ENCODE measurements at regions of chr6 and their contacts with region 1.

Region 1: DNA sequence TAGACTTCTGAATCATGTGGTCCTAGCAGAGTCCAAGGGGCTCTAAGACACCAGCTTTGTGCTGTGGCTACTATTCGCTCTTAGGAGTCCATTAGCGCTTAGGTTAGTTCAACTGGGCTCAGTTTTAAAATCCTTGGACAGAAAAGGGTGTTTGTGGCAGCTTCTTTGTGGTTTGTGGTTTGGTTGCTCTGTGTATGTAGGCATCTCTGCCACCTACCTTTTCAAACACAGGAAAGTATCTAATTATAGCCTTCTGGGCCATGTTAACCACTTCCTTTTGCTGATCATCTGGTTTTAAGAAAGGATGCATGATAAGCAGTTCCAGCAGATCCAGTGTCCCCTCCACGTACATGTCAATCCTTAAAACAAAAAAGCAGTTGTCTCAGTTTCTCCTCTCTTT is 10.8 kb downstream of the GSTA4 start:
- DNase-seq: peak in 27 of 35 experiments; percentile 3 to 77 (median 22)
- ATAC-seq: peak; percentile 64 to 98 (median 94)
- H3K4me3 ChIP-seq: peak overlapping the region in 1 of 2 donors; percentile 0
- H3K4me3 Mint-ChIP-seq: peak overlapping the region; percentile 46 to 66 (median 53)
- H3K27ac ChIP-seq: no peak overlapping the region
- H3K27ac Mint-ChIP-seq: peak overlapping the region in 1 of 2 donors; percentile 15
- H3K4me1 ChIP-seq: peaks cover 30 to 32% of the 10 kb centered on the region in 2 experiments
- H3K4me1 Mint-ChIP-seq: peaks cover 38 to 41% (median 38%) of the 10 kb centered on the region in 3 donors
- H3K27me3 ChIP-seq: peaks cover 0 to 8% of the 10 kb centered on the region in 2 experiments
- H3K27me3 Mint-ChIP-seq: peaks cover 22 to 25% of the 10 kb centered on the region in 2 donors

Region 2: GRCh38 chr6:52788478-52788877 is 195.8 kb before region 1 on chr6:
- CTCF ChIA-PET with region 1: no interaction called
- POLR2A ChIA-PET with region 1: no interaction called
- DNase-seq: no peak
- ATAC-seq: no peak
- H3K4me3 ChIP-seq: no peak overlapping the region
- H3K4me3 Mint-ChIP-seq: no peak overlapping the region
- H3K27ac ChIP-seq: no peak overlapping the region
- H3K27ac Mint-ChIP-seq: no peak overlapping the region
- H3K4me1 ChIP-seq: no peaks in the 10 kb centered on the region
- H3K4me1 Mint-ChIP-seq: no peaks in the 10 kb centered on the region
- H3K27me3 ChIP-seq: peaks cover 0 to 4% of the 10 kb centered on the region in 2 experiments
- H3K27me3 Mint-ChIP-seq: peaks cover 15 to 16% of the 10 kb centered on the region in 2 donors

Region 3: GRCh38 chr6:52995913-52996645 is 11.8 kb after region 1 on chr6:
- CTCF ChIA-PET with region 1: interaction called, 4 to 17 read pairs
- POLR2A ChIA-PET with region 1: interaction called in 1 of 2 experiments, 7 read pairs
- DNase-seq: peak in 28 of 35 experiments; percentile 4 to 65 (median 18)
- ATAC-seq: peak in 1 of 4 experiments; percentile 13
- H3K4me3 ChIP-seq: peak overlapping the region; percentile 34 to 83
- H3K4me3 Mint-ChIP-seq: peak overlapping the region; percentile 83 to 96 (median 95)
- H3K27ac ChIP-seq: peak overlapping the region; percentile 6
- H3K27ac Mint-ChIP-seq: peak overlapping the region; percentile 97 to 100
- H3K4me1 ChIP-seq: peaks cover 0 to 14% of the 10 kb centered on the region in 2 experiments
- H3K4me1 Mint-ChIP-seq: peaks cover 14 to 33% (median 29%) of the 10 kb centered on the region in 3 donors
- H3K27me3 ChIP-seq: no peaks in the 10 kb centered on the region
- H3K27me3 Mint-ChIP-seq: peaks cover 0 to 5% of the 10 kb centered on the region in 2 donors

Region 4: GRCh38 chr6:53658992-53659391 is 674.7 kb after region 1 on chr6:
- CTCF ChIA-PET with region 1: no interaction called
- POLR2A ChIA-PET with region 1: no interaction called
- DNase-seq: no peak
- ATAC-seq: no peak
- H3K4me3 ChIP-seq: no peak overlapping the region
- H3K4me3 Mint-ChIP-seq: no peak overlapping the region
- H3K27ac ChIP-seq: no peak overlapping the region
- H3K27ac Mint-ChIP-seq: no peak overlapping the region
- H3K4me1 ChIP-seq: no peaks in the 10 kb centered on the region
- H3K4me1 Mint-ChIP-seq: no peaks in the 10 kb centered on the region
- H3K27me3 ChIP-seq: peaks cover 0 to 2% of the 10 kb centered on the region in 2 experiments
- H3K27me3 Mint-ChIP-seq: peaks cover 7 to 11% of the 10 kb centered on the region in 2 donors

Measured in T-cell (primary cell).